GM12878 (cell line): ENCODE measurements at regions of chr10 and their contacts with region 1.

Region 1: GRCh38 chr10:59133841-59134593 is 42.4 kb upstream of the PHYHIPL start:
- DNase-seq: no peak
- ATAC-seq: no peak
- H3K4me3 ChIP-seq: no peak overlapping the region
- H3K27ac ChIP-seq: no peak overlapping the region
- H3K4me1 ChIP-seq: no peaks in the 10 kb centered on the region
- H3K27me3 ChIP-seq: no peaks in the 10 kb centered on the region
- CTCF ChIP-seq: no peak
- EP300 ChIP-seq: no peak
- POLR2A ChIP-seq: no peak
- RAD21 ChIP-seq: no peak

Region 2: GRCh38 chr10:59027975-59028655 is 105.9 kb before region 1 on chr10:
- CTCF ChIA-PET with region 1: no interaction called
- POLR2A ChIA-PET with region 1: no interaction called
- RAD21 ChIA-PET with region 1: no interaction called
- SMC1A ChIA-PET with region 1: no interaction called
- in situ Hi-C with region 1: no loop called
- intact Hi-C with region 1: no loop called
- DNase-seq: no peak
- ATAC-seq: no peak
- H3K4me3 ChIP-seq: no peak overlapping the region
- H3K27ac ChIP-seq: no peak overlapping the region
- H3K4me1 ChIP-seq: no peaks in the 10 kb centered on the region
- H3K27me3 ChIP-seq: no peaks in the 10 kb centered on the region
- CTCF ChIP-seq: no peak
- EP300 ChIP-seq: no peak
- POLR2A ChIP-seq: no peak
- RAD21 ChIP-seq: no peak

Region 3: GRCh38 chr10:59148701-59149100 is 14.7 kb after region 1 on chr10:
- CTCF ChIA-PET with region 1: interaction called, 5 read pairs
- POLR2A ChIA-PET with region 1: no interaction called
- RAD21 ChIA-PET with region 1: no interaction called
- SMC1A ChIA-PET with region 1: interaction called, 46 read pairs
- in situ Hi-C with region 1: no loop called
- intact Hi-C with region 1: no loop called
- DNase-seq: no peak
- ATAC-seq: no peak
- H3K4me3 ChIP-seq: no peak overlapping the region
- H3K27ac ChIP-seq: no peak overlapping the region
- H3K4me1 ChIP-seq: no peaks in the 10 kb centered on the region
- H3K27me3 ChIP-seq: no peaks in the 10 kb centered on the region
- CTCF ChIP-seq: no peak
- EP300 ChIP-seq: no peak
- POLR2A ChIP-seq: no peak
- RAD21 ChIP-seq: no peak

Region 4: DNA sequence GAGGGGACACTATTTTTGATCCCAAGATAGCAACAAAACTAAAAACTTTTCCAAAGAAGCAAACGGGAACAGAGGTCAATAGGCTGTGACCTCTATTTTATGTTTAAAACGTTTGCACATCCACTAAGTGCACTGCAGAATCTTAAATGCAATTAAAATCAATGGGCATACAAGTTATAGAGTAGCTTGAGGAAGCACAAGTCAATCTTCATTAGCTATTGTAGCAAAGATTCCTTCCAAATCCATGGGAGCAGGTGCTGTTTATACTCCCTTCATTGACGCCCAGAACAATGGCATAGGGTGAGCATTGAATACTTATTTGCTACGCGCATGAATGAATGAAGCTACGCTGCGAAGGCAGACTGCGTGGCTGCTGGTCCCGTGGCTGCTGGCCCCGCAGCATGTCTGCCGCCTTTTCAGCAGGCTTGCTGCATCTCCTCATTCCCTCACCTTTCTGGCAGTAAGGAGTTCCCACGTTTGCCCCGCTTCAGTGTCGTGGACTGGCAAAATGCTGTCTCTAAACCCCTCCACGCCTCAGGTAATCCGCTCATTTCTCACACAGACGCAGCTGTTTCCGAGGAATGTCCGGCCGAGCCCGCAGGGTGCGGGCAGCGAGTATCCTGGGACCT is 41.6 kb after region 1 on chr10:
- CTCF ChIA-PET with region 1: no interaction called
- POLR2A ChIA-PET with region 1: no interaction called
- RAD21 ChIA-PET with region 1: interaction called, 4 read pairs
- SMC1A ChIA-PET with region 1: interaction called, 12 read pairs
- in situ Hi-C with region 1: no loop called
- intact Hi-C with region 1: no loop called
- DNase-seq: no peak
- ATAC-seq: no peak
- H3K4me3 ChIP-seq: no peak overlapping the region
- H3K27ac ChIP-seq: no peak overlapping the region
- H3K4me1 ChIP-seq: no peaks in the 10 kb centered on the region
- H3K27me3 ChIP-seq: peaks cover 0 to 4% of the 10 kb centered on the region in 2 experiments; a peak in 1 of 4 replicates
- CTCF ChIP-seq: no peak
- EP300 ChIP-seq: no peak
- POLR2A ChIP-seq: no peak
- RAD21 ChIP-seq: no peak

Region 5: DNA sequence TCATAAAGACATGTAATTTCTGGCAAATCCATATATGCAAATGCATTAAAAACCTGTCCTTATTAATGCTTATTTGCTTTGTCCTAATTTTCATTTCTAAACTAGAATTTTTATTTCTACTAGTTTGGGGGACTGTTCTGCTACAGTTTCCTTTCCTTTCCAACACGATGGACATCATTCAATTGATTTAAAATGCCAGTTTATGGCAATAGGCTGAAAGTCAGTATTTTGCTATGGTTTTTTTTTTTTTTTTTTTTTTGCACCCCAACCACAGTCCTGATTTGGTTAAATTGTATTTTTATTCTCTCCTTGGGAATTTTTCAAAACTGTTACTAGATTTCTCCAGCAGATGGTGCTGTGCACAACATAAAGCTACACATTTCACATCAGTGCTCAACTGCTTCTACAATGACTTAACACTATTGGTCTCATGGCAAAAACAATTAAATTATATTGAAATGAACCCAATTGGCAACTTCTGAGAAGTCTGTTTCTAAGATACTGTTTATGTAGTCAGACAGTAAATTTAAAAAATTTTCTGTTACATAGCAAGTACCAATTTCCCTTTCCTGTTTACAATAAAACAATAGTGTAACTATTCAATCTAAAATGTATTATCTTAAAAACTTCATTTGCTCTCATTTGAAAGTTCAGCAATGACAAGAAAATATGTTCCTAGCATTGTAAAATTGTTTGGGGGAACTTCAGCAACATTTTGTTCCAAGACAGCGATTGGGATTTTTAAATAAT is 966.2 kb after region 1 on chr10:
- CTCF ChIA-PET with region 1: no interaction called
- POLR2A ChIA-PET with region 1: no interaction called
- RAD21 ChIA-PET with region 1: no interaction called
- SMC1A ChIA-PET with region 1: no interaction called
- in situ Hi-C with region 1: no loop called
- intact Hi-C with region 1: no loop called
- DNase-seq: no peak
- ATAC-seq: peak; percentile 73
- H3K4me3 ChIP-seq: no peak overlapping the region
- H3K27ac ChIP-seq: no peak overlapping the region
- H3K4me1 ChIP-seq: peaks cover 9% of the 10 kb centered on the region
- H3K27me3 ChIP-seq: no peaks in the 10 kb centered on the region
- CTCF ChIP-seq: peak; percentile 51 to 55 (median 54); a peak in 5 of 6 replicates
- EP300 ChIP-seq: no peak
- POLR2A ChIP-seq: no peak
- RAD21 ChIP-seq: peak; percentile 66